ENCODE measurements at regions of chr18 and their contacts with region 1.

Region 1: GRCh38 chr18:7452331-7452730 is 114.8 kb upstream of the PTPRM start:
- DNase-seq: peak; percentile 38 to 71
- H3K4me3 ChIP-seq: no peak overlapping the region
- H3K27ac ChIP-seq: no peak overlapping the region
- H3K4me1 ChIP-seq: no peaks in the 10 kb centered on the region; a peak in 1 of 7 replicates
- H3K27me3 ChIP-seq: no peaks in the 10 kb centered on the region
- CTCF ChIP-seq: peak; percentile 61 to 82 (median 82)
- EP300 ChIP-seq: no peak
- POLR2A ChIP-seq: no peak
- RAD21 ChIP-seq: peak; percentile 63 to 69

Region 2: GRCh38 chr18:7436166-7436565 is 16.2 kb before region 1 on chr18:
- CTCF ChIA-PET with region 1: interaction called, 15 read pairs
- POLR2A ChIA-PET with region 1: no interaction called
- DNase-seq: no peak
- H3K4me3 ChIP-seq: no peak overlapping the region
- H3K27ac ChIP-seq: no peak overlapping the region
- H3K4me1 ChIP-seq: 0 out of 7 replicates have a peak, but pooled peaks cover 0 to 4% (median 0%) of the 10 kb centered on the region in 4 experiments
- H3K27me3 ChIP-seq: no peaks in the 10 kb centered on the region
- CTCF ChIP-seq: no peak
- EP300 ChIP-seq: no peak
- POLR2A ChIP-seq: no peak
- RAD21 ChIP-seq: no peak

Region 3: DNA sequence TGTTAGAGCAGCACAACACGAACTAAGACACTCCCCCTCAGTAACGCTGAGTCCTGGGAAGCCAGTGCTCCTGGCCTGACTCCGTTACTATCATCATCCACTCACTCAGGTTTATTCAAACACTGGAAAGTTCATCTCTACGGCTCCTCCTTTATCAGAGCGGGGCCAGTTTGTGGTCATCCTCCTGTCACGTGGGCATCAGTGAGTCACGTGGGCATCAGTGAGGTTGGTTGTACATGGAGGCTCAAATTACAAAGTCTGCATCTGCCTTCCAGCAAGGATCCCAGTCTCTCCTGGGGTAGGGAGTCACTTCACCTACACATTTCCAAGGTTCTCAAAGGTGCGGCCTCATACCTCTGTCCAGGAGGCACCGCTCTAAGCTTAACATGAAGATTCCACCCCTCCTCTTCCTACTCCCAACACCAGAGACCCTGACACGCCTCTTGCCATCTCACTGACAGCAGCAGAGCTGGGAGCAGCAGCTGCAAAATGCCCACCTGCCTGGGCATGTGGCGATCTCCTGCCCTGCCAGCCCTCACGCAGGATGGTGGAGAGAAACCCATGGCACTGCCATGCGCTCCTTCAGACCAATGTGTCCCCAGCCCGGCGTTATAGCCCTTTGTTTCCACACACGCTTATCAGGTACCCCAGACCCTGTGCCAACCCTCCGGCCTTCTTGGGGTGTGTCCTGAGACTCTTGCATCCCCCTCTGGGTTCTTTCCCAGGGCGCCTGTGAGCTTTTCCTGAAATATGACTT is 15.6 kb after region 1 on chr18:
- CTCF ChIA-PET with region 1: interaction called, 11 read pairs
- POLR2A ChIA-PET with region 1: interaction called, 3 read pairs
- DNase-seq: no peak
- H3K4me3 ChIP-seq: no peak overlapping the region
- H3K27ac ChIP-seq: no peak overlapping the region
- H3K4me1 ChIP-seq: peaks cover 0 to 2% (median 0%) of the 10 kb centered on the region in 4 experiments; a peak in 1 of 7 replicates
- H3K27me3 ChIP-seq: no peaks in the 10 kb centered on the region
- CTCF ChIP-seq: no peak
- EP300 ChIP-seq: no peak
- POLR2A ChIP-seq: no peak
- RAD21 ChIP-seq: no peak

Region 4: GRCh38 chr18:7476386-7476785 is 24.1 kb after region 1 on chr18:
- CTCF ChIA-PET with region 1: interaction called, 12 read pairs
- POLR2A ChIA-PET with region 1: interaction called, 3 read pairs
- DNase-seq: no peak
- H3K4me3 ChIP-seq: no peak overlapping the region
- H3K27ac ChIP-seq: no peak overlapping the region
- H3K4me1 ChIP-seq: no peaks in the 10 kb centered on the region
- H3K27me3 ChIP-seq: no peaks in the 10 kb centered on the region
- CTCF ChIP-seq: no peak
- EP300 ChIP-seq: no peak
- POLR2A ChIP-seq: no peak
- RAD21 ChIP-seq: no peak

Region 5: DNA sequence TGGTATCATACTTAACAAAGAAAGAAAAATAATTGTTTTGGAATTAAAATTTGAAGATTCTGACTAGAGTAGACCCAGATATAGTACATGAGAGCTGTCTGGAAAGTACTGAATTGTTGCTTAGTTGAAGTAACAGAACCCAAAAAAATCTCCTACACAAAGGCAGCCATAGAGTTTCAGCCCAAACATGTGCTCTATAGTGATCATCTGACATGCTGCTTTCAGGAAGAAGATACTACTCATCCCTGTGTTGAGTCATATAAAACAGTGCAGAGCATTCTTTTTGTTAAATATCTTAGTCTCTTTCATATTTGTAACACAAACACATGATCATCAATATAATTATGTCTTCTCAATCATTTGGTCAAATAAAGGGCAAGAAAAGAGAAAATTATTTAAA is 30.0 kb after region 1 on chr18:
- CTCF ChIA-PET with region 1: interaction called, 16 read pairs
- POLR2A ChIA-PET with region 1: interaction called, 3 read pairs
- DNase-seq: no peak
- H3K4me3 ChIP-seq: no peak overlapping the region
- H3K27ac ChIP-seq: no peak overlapping the region
- H3K4me1 ChIP-seq: no peaks in the 10 kb centered on the region
- H3K27me3 ChIP-seq: no peaks in the 10 kb centered on the region
- CTCF ChIP-seq: no peak
- EP300 ChIP-seq: no peak
- POLR2A ChIP-seq: no peak
- RAD21 ChIP-seq: no peak